ENCODE measurements at regions of chr9 and their contacts with region 1.

Region 1: DNA sequence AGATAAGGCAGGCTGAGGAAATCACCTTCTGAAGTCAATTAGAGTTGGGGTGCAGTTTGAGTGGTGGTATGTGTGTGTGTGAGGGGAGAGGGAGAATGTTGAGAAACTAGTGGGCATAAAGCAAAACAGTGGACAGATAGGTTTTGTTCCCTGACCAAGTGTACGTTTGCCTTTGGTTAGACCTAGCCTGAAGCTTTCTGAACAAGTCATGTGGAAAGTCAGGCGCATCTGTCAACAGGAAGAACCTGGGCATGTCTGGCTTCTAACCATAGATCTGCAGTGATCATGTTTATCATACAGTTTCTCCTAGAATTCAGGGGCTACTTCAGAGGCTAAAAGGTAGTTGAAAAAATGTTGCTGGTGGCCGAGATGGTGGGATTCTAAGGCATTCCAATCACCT is 143.2 kb upstream of the PCA3 start:
- DNase-seq: peak; percentile 25
- ATAC-seq: no peak
- H3K4me3 ChIP-seq: no peak overlapping the region
- H3K4me3 Mint-ChIP-seq: peak overlapping the region; percentile 16
- H3K27ac ChIP-seq: no peak overlapping the region
- H3K27ac Mint-ChIP-seq: peak overlapping the region; percentile 2
- H3K4me1 ChIP-seq: peaks cover 11 to 12% of the 10 kb centered on the region in 2 donors
- H3K4me1 Mint-ChIP-seq: peaks cover 17% of the 10 kb centered on the region
- H3K27me3 ChIP-seq: no peaks in the 10 kb centered on the region
- H3K27me3 Mint-ChIP-seq: no peaks in the 10 kb centered on the region
- CTCF ChIP-seq: no peak

Region 2: DNA sequence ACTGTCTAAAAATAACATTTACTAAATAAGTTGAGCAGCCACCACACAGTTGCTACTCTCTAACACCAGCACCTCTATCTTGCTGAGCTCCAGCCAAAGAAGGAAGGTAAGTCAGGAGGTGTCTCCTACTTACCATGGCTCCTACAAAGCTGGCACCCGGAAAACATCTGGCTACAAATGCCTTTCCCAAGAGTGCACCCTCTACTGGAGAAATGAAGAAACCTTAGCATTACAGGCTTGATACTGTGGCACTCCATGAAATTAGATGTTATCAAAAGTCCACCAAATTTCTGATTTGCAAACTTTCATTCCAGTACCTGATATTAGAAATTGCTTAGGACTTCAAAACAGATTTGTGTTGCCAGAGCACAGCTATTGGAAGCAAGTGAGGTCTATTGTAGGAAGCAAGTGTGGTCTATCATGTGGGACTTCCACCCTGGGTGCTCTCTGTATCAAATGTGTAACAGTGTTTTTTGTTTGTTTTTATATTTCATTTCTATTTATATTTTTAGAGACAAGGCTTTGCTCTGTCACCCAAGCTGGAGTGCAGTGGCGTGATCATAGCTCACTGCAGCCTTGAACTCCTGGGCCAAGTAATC is 201.1 kb before region 1 on chr9:
- CTCF ChIA-PET with region 1: no interaction called
- POLR2A ChIA-PET with region 1: no interaction called
- intact Hi-C with region 1: no loop called
- DNase-seq: no peak
- ATAC-seq: no peak
- H3K4me3 ChIP-seq: no peak overlapping the region
- H3K4me3 Mint-ChIP-seq: no peak overlapping the region
- H3K27ac ChIP-seq: no peak overlapping the region
- H3K27ac Mint-ChIP-seq: no peak overlapping the region
- H3K4me1 ChIP-seq: no peaks in the 10 kb centered on the region
- H3K4me1 Mint-ChIP-seq: no peaks in the 10 kb centered on the region
- H3K27me3 ChIP-seq: no peaks in the 10 kb centered on the region
- H3K27me3 Mint-ChIP-seq: no peaks in the 10 kb centered on the region
- CTCF ChIP-seq: peak; percentile 35

Region 3: DNA sequence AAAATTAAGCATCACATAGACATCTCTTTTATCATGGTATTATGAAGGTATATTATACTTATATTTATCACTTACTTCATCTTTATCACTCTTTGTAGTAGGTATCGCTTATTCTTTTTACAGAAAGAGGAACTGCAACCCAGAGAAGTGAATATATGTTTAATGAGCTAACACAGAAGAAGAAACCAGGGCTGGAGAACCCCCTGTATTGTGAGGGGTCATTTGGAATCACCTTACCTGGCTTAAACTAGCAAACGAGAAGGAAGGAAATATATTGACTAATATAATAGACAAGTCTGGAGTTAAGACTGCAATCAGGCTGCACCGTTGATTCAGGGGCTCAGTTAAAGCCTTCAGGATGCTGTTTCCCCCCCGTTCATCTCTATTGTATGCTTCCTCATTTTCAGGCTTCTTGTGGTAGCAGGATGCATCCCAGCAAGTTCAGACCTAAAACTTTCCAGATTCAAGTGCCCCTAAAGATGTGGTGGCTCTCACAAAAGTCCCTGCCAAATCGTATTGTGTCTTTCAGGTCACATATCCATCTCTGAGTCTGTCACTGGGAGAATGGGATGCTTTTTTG is 15.6 kb before region 1 on chr9:
- CTCF ChIA-PET with region 1: no interaction called
- POLR2A ChIA-PET with region 1: interaction called, 3 read pairs
- intact Hi-C with region 1: loop called (anchors 1 kb)
- DNase-seq: peak; percentile 56
- ATAC-seq: peak; percentile 57
- H3K4me3 ChIP-seq: no peak overlapping the region
- H3K4me3 Mint-ChIP-seq: no peak overlapping the region
- H3K27ac ChIP-seq: no peak overlapping the region
- H3K27ac Mint-ChIP-seq: no peak overlapping the region
- H3K4me1 ChIP-seq: peaks cover 12 to 15% of the 10 kb centered on the region in 2 donors
- H3K4me1 Mint-ChIP-seq: peaks cover 15% of the 10 kb centered on the region
- H3K27me3 ChIP-seq: peaks cover 0 to 3% (median 0%) of the 10 kb centered on the region in 4 experiments
- H3K27me3 Mint-ChIP-seq: peaks cover 5% of the 10 kb centered on the region
- CTCF ChIP-seq: no peak

Measured in B cell (primary cell).